Ascending aorta (tissue), 2 donors: ENCODE measurements at regions of chr1 and their contacts with region 1.

Region 1: DNA sequence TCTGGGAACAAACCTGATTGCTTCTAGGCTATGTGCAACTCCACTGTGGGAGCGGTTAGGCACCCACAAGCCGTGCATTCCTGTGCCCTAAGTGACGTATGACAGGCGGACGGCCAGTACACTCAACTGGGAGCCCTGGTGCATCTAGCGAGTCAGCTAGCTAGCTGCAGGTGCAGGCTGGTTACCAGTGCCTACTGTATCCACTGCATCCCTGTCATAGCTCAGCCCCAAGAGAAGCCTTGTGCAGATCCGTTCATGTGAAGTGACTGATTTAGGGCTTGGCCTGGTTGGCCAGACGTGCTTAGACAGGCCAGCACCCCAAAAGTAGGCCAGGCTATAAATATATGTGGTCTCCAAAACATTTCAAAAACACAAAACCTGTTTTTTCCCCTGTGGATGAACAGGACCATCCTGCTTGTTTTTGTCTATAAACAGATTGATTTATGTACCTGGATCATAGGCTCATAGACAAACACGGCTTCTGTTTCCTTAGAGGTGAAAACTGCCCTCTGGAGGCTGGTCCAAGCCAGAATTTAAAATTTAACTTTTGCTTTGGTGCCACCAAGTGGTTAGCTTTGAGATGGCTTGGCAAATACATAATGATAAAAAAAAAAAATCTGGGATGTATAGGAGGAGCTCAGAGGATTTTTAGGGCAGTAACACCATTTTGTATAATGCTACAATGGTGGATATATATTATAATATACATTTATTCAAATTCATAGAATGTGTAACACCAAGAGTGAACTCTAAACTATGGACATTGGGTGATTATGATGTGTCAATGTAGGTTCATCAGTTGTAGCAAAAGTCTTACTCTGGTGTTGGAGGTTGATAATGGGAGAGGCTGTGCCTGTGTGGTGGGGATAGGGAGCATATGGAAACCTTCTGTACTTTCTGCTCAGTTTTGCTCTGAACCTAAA is 68.5 kb downstream of the GIPC2 start:
- DNase-seq: peak in 1 of 2 donors; percentile 72
- H3K4me3 ChIP-seq: peak overlapping the region in 1 of 2 donors; percentile 7
- H3K27ac ChIP-seq: peak overlapping the region in 1 of 2 donors; percentile 21
- H3K4me1 ChIP-seq: peaks cover 0 to 7% of the 10 kb centered on the region in 2 donors
- H3K27me3 ChIP-seq: no peaks in the 10 kb centered on the region
- CTCF ChIP-seq: peak; percentile 77 to 88 (median 78)

Region 2: GRCh38 chr1:77759071-77760028 is 354.9 kb before region 1 on chr1 and contains the start of gene USP33:
- intact Hi-C with region 1: loop called (anchors 10 kb)
- DNase-seq: peak; percentile 53 to 90
- H3K4me3 ChIP-seq: peak within 1 kb of the TSS; percentile 90 to 96
- H3K27ac ChIP-seq: peak within 1 kb of the TSS; percentile 88 to 89
- H3K4me1 ChIP-seq: peaks cover 0 to 4% of the 10 kb centered on the region in 2 donors
- H3K27me3 ChIP-seq: no peaks in the 10 kb centered on the region
- CTCF ChIP-seq: no peak
- total RNA-seq, gene USP33: 28.6 TPM

Region 3: DNA sequence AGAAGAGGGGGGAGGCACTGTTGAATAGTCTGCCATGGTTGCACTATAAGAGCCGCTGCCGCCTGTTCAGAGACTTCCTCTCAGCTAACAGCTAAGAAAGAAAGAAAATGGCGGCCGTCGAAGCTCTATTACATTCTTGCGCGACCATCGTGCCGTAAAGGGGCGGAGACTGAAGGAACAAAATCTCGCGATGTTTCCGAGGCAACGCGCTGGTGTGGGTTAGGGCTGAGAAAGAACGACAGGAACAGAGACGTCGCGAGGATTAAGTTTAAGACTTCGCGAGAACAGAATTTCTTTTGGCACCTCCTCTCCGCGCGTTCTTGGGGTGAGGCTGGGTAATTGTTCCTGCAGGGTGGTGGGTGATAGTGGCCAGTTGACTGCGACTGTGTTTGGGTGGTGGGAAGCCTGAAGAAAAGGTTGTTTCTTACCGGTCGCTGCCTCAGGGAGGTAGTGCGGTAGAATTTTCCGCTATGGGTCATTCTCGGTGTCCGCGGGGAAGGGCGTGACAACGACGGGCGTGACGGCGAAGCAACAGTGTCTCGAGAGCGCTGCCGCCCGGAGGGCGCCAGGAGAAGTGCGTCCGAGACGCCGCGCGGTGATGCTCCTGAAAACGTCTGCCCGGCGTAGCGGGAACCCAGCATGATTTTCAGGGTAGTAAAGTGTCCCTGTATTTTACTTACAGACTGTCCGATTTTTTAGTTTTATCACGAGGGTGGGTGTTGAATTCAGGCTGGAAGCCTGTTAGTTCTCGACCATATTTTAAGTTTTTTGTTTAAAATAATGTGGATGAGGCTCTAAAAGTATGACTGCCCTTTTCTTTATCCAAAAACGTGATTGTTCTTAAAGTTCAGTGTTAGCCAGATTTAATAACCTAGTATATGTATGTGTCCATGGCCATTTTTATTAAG is 135.1 kb before region 1 on chr1 and contains the start of gene FUBP1:
- intact Hi-C with region 1: loop called (anchors 1 kb)
- DNase-seq: peak; percentile 86 to 98
- H3K4me3 ChIP-seq: peak within 1 kb of the TSS; percentile 67 to 86
- H3K27ac ChIP-seq: peak within 1 kb of the TSS; percentile 97 to 98
- H3K4me1 ChIP-seq: peaks cover 0 to 32% of the 10 kb centered on the region in 2 donors
- H3K27me3 ChIP-seq: no peaks in the 10 kb centered on the region
- CTCF ChIP-seq: peak; percentile 84 to 86 (median 86)
- total RNA-seq, gene FUBP1: 90.3 TPM

Region 4: GRCh38 chr1:78004719-78005447 is 109.4 kb before region 1 on chr1 and contains the start of gene DNAJB4:
- intact Hi-C with region 1: loop called (anchors 2 kb)
- DNase-seq: peak; percentile 40 to 90
- H3K4me3 ChIP-seq: peak within 1 kb of the TSS; percentile 55 to 74
- H3K27ac ChIP-seq: peak within 1 kb of the TSS; percentile 88
- H3K4me1 ChIP-seq: peaks cover 0 to 6% of the 10 kb centered on the region in 2 donors
- H3K27me3 ChIP-seq: no peaks in the 10 kb centered on the region
- CTCF ChIP-seq: no peak
- total RNA-seq, gene DNAJB4: 20.1 TPM

Region 5: GRCh38 chr1:78045926-78046778 is 68.1 kb before region 1 on chr1 and contains the start of gene GIPC2:
- intact Hi-C with region 1: loop called (anchors 5 kb)
- DNase-seq: peak in 1 of 2 donors; percentile 66
- H3K4me3 ChIP-seq: peak within 1 kb of the TSS; percentile 65 to 77
- H3K27ac ChIP-seq: peak within 1 kb of the TSS; percentile 10 to 28
- H3K4me1 ChIP-seq: peaks cover 0 to 4% of the 10 kb centered on the region in 2 donors
- H3K27me3 ChIP-seq: no peaks in the 10 kb centered on the region
- CTCF ChIP-seq: no peak
- total RNA-seq, gene GIPC2: 0.64 TPM

Region 6: DNA sequence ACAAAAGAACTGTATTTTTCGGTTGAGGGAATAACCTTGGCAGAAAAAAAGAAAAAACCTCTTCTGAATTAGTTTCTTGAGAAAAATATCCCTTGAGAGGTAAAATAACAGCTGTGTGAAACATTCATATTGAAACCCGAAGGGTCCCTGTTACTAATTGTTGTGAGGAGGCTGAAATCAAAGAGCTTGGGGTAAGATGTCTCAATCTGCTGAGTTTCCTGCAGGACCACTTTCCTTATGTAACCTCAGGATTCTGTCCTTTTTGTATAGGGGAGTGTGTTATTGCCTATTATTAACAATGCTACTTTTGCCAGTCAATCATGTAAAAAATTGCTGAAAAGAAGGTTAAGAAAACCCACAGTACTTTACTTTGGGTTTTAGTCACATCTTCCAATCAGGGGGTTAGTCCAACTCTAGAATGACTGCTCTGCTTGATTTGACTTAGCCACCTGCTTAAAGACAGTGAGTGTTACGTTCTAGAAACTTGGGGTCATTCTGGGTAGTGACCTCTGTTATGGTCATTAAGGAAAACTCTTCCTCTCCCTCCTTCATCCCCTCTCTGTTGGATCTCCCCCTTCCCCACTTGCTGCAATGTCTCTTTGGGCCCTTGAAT is 70.3 kb after region 1 on chr1:
- intact Hi-C with region 1: no loop called
- DNase-seq: no peak
- H3K4me3 ChIP-seq: no peak overlapping the region
- H3K27ac ChIP-seq: no peak overlapping the region
- H3K4me1 ChIP-seq: no peaks in the 10 kb centered on the region
- H3K27me3 ChIP-seq: no peaks in the 10 kb centered on the region
- CTCF ChIP-seq: no peak

Region 7: DNA sequence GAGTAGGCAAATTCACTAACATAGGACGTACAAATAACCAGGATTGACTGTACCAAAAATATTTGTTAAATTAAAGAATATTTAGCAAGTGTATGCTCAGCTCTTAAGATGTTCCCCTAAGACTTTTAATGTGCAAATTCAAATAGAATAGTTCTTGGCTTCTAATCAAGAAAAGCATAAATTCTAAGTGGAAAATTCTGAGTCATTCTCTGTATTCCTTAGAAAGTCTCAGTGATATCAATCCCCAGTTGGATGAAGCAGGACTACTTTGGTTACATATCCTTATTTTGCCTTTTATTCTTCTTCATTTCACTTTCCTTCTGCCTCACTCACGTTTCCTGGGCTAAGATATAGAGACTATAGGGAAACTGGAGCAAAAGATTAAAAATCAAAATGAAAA is 665.5 kb after region 1 on chr1:
- intact Hi-C with region 1: no loop called
- DNase-seq: no peak
- H3K4me3 ChIP-seq: no peak overlapping the region
- H3K27ac ChIP-seq: no peak overlapping the region
- H3K4me1 ChIP-seq: no peaks in the 10 kb centered on the region
- H3K27me3 ChIP-seq: no peaks in the 10 kb centered on the region
- CTCF ChIP-seq: no peak